HepG2 (cell line): ENCODE measurements at regions of chr7 and their contacts with region 1.

Region 1: GRCh38 chr7:41554481-41554880 is 148.4 kb downstream of the INHBA start:
- DNase-seq: no peak
- ATAC-seq: no peak
- H3K4me3 ChIP-seq: no peak overlapping the region
- H3K27ac ChIP-seq: no peak overlapping the region
- H3K4me1 ChIP-seq: no peaks in the 10 kb centered on the region
- H3K27me3 ChIP-seq: no peaks in the 10 kb centered on the region
- CTCF ChIP-seq: no peak
- EP300 ChIP-seq: no peak
- POLR2A ChIP-seq: no peak
- RAD21 ChIP-seq: no peak

Region 2: DNA sequence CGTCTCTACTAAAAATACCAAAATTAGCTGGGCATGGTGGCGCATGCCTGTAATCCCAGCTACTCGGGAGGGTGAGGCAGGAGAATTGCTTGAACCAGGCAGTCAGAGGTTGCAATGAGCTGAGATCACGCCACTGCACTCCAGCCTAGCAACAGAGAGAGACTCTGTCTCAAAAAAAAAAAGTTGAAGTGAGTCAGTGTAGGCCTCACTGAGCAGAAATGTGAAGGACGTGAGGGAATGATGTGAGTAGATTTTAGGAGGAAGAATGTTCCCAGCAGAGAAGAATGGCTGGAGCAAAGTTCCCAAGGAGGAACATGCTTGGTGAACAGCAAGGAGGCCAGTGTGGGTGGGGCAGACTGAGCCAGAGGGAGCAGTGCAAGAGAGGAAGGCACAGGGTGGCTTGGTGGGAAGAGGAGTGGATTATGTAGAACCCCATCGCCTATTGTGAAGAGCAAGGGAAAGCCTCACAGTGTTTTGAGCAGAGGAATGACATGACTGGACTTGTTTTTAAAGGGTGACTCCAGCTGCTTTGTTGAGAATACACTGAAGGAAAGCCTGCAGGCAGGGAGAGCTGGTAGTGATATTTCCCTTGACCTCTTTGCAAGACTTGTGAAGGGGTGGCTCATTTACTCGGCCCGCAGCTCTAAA is 711.0 kb before region 1 on chr7:
- CTCF ChIA-PET with region 1: no interaction called
- POLR2A ChIA-PET with region 1: no interaction called
- in situ Hi-C with region 1: no loop called
- intact Hi-C with region 1: no loop called
- DNase-seq: no peak
- ATAC-seq: no peak
- H3K4me3 ChIP-seq: no peak overlapping the region
- H3K27ac ChIP-seq: no peak overlapping the region
- H3K4me1 ChIP-seq: no peaks in the 10 kb centered on the region
- H3K27me3 ChIP-seq: no peaks in the 10 kb centered on the region
- CTCF ChIP-seq: no peak
- EP300 ChIP-seq: no peak
- POLR2A ChIP-seq: no peak
- RAD21 ChIP-seq: no peak

Region 3: GRCh38 chr7:41566581-41566980 is 12.1 kb after region 1 on chr7:
- CTCF ChIA-PET with region 1: no interaction called
- POLR2A ChIA-PET with region 1: no interaction called
- in situ Hi-C with region 1: no loop called
- intact Hi-C with region 1: loop called (anchors 1 kb)
- DNase-seq: no peak
- ATAC-seq: no peak
- H3K4me3 ChIP-seq: no peak overlapping the region
- H3K27ac ChIP-seq: no peak overlapping the region
- H3K4me1 ChIP-seq: no peaks in the 10 kb centered on the region
- H3K27me3 ChIP-seq: no peaks in the 10 kb centered on the region
- CTCF ChIP-seq: no peak
- EP300 ChIP-seq: no peak
- POLR2A ChIP-seq: no peak
- RAD21 ChIP-seq: no peak